ENCODE measurements at regions of chr2 and their contacts with region 1.

Region 1: DNA sequence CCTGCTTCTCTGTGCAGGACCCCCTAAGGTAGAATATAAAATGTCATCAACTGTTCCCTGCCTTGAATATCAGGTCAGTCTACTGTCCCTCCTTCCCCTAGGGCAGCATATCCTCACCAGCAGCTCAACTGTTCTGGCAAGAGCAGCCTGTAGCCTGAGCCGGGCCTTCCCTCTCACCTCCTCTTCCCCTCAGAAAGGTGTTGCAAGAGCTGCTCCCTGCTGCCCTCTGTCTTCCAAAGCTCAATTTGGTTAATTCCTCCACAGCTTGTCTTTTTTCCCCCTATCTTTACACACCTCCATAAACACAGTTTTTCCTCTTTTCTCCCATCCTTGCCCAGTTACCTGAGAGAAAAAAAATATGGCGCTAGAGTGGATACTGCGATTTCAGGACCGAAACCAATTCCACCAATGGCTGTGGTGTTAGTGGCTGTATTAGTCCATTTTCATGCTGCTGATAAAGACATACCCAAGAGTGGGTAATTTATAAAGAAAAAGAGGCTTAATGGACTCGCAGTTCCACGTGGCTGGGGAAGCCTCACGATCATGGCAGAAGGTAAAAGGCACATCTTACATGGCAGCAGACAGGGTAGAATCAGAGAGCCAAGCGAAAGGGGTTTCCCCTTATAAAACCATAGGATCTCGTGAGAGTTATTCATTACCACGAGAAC is 184.7 kb downstream of the MREG start:
- DNase-seq: peak; percentile 66 to 80
- H3K4me3 ChIP-seq: no peak overlapping the region
- H3K4me3 Mint-ChIP-seq: no peak overlapping the region
- H3K27ac Mint-ChIP-seq: peak overlapping the region; percentile 79
- H3K4me1 ChIP-seq: peaks cover 80% of the 10 kb centered on the region
- H3K4me1 Mint-ChIP-seq: peaks cover 32% of the 10 kb centered on the region
- H3K27me3 ChIP-seq: no peaks in the 10 kb centered on the region
- H3K27me3 Mint-ChIP-seq: no peaks in the 10 kb centered on the region
- CTCF ChIP-seq: peak; percentile 54 to 66

Region 2: DNA sequence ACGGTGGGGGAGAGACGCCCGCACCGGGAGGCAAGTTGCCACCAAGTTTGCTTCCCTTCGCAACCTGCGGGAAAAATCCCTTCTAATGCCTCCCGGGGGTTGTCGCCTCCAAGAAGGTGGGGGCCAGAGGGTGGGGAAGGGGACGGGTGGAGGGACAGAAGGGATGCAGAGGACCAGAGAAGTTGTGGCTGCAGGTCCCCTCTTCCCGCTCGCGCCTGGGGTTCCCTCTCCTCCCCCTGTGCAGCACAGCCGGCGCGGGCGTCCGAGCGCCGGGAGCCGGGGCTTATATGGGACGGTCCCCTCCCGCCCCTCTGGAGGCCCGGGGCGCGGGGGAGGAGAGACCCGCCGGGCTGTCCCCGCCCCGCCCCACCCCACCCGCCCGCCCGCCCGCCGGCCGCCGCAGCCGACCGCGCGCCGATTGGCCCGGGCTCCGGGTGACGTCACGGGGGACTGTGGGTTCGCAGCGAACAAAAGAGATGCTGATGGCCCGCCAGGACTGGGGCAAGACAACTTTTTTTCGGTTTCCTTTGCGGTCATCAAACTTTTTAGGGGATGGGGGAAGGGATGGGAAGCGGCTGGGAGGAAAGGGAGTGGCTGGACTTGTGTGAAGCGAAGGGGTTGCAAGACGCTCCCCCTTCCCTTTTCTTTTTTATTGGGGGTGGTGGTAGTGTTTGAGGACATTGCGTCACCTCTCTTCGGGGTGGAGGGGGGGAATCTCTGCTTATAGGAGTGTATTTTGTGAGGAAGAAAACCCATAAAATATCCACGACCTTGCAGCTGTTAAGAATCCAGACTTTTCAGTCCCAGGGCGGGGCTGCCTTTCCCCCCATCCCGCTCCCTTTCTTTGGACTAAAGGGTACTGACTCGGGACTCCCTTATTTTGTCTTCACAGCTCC is 392.6 kb before region 1 on chr2 and contains the start of gene FN1:
- CTCF ChIA-PET with region 1: no interaction called
- POLR2A ChIA-PET with region 1: no interaction called
- intact Hi-C with region 1: loop called (anchors 2 kb)
- DNase-seq: peak; percentile 95 to 96
- H3K4me3 ChIP-seq: peak within 1 kb of the TSS; percentile 99
- H3K4me3 Mint-ChIP-seq: peak within 1 kb of the TSS; percentile 84
- H3K27ac Mint-ChIP-seq: peak within 1 kb of the TSS; percentile 94
- H3K4me1 ChIP-seq: peaks cover 40% of the 10 kb centered on the region
- H3K4me1 Mint-ChIP-seq: peaks cover 26% of the 10 kb centered on the region
- H3K27me3 ChIP-seq: no peaks in the 10 kb centered on the region
- H3K27me3 Mint-ChIP-seq: no peaks in the 10 kb centered on the region
- CTCF ChIP-seq: no peak
- total RNA-seq, gene FN1: 3,805 and 3,872 TPM in 2 replicates

Region 3: GRCh38 chr2:215454519-215455246 is 374.0 kb before region 1 on chr2:
- CTCF ChIA-PET with region 1: no interaction called
- POLR2A ChIA-PET with region 1: no interaction called
- intact Hi-C with region 1: loop called (anchors 1 kb)
- DNase-seq: peak in 1 of 2 experiments; percentile 52
- H3K4me3 ChIP-seq: no peak overlapping the region
- H3K4me3 Mint-ChIP-seq: no peak overlapping the region
- H3K27ac Mint-ChIP-seq: no peak overlapping the region
- H3K4me1 ChIP-seq: peaks cover 9% of the 10 kb centered on the region; the same call in 1 of the 2 replicates
- H3K4me1 Mint-ChIP-seq: peaks cover 7% of the 10 kb centered on the region
- H3K27me3 ChIP-seq: no peaks in the 10 kb centered on the region
- H3K27me3 Mint-ChIP-seq: no peaks in the 10 kb centered on the region
- CTCF ChIP-seq: peak; percentile 65 to 73

Region 4: GRCh38 chr2:215773728-215774127 is 54.9 kb before region 1 on chr2:
- CTCF ChIA-PET with region 1: no interaction called
- POLR2A ChIA-PET with region 1: no interaction called
- intact Hi-C with region 1: loop called (anchors 2 kb)
- DNase-seq: no peak
- H3K4me3 ChIP-seq: no peak overlapping the region
- H3K4me3 Mint-ChIP-seq: no peak overlapping the region
- H3K27ac Mint-ChIP-seq: peak overlapping the region; percentile 56
- H3K4me1 ChIP-seq: peaks cover 35% of the 10 kb centered on the region
- H3K4me1 Mint-ChIP-seq: peaks cover 32% of the 10 kb centered on the region
- H3K27me3 ChIP-seq: no peaks in the 10 kb centered on the region
- H3K27me3 Mint-ChIP-seq: no peaks in the 10 kb centered on the region
- CTCF ChIP-seq: no peak

Region 5: GRCh38 chr2:215793747-215794595 is 34.7 kb before region 1 on chr2:
- CTCF ChIA-PET with region 1: interaction called, 7 read pairs
- POLR2A ChIA-PET with region 1: no interaction called
- intact Hi-C with region 1: loop called (anchors 1 kb)
- DNase-seq: peak in 1 of 2 experiments; percentile 62
- H3K4me3 ChIP-seq: no peak overlapping the region
- H3K4me3 Mint-ChIP-seq: no peak overlapping the region
- H3K27ac Mint-ChIP-seq: peak overlapping the region; percentile 81
- H3K4me1 ChIP-seq: peaks cover 41% of the 10 kb centered on the region
- H3K4me1 Mint-ChIP-seq: peaks cover 48% of the 10 kb centered on the region
- H3K27me3 ChIP-seq: no peaks in the 10 kb centered on the region
- H3K27me3 Mint-ChIP-seq: no peaks in the 10 kb centered on the region
- CTCF ChIP-seq: no peak

Region 6: GRCh38 chr2:215817046-215817445 is 11.6 kb before region 1 on chr2:
- CTCF ChIA-PET with region 1: interaction called, 5 read pairs
- POLR2A ChIA-PET with region 1: interaction called, 3 read pairs
- intact Hi-C with region 1: loop called (anchors 1 kb)
- DNase-seq: no peak
- H3K4me3 ChIP-seq: no peak overlapping the region
- H3K4me3 Mint-ChIP-seq: no peak overlapping the region
- H3K27ac Mint-ChIP-seq: peak overlapping the region; percentile 39
- H3K4me1 ChIP-seq: peaks cover 24% of the 10 kb centered on the region
- H3K4me1 Mint-ChIP-seq: peaks cover 26% of the 10 kb centered on the region
- H3K27me3 ChIP-seq: no peaks in the 10 kb centered on the region
- H3K27me3 Mint-ChIP-seq: no peaks in the 10 kb centered on the region
- CTCF ChIP-seq: no peak

Region 7: DNA sequence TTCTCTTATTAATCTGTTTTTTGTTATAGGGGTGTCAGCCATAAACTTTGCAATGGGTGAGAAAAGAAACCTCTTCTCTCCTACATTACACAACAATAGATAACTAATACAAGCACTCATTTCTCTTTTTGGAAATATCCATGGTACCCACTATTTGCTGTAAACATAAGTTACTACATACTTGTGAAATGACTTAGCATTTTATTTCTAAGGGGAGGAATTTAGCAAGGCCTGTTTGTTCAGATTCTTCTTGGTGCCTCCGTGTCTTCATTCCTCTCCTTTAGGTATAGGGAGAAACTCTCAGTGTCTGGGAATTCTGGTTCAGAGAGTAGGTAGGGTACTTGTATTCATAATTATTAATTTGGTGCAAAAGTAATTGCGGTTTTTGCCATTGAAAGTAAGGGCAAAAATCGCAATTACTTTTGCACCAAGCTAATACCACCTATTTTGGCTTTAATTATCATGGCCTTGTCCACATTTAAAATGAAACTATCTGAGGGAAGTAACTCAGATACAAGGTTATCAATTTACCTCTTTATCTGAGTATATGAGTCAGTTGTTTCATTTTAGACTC is 49.9 kb after region 1 on chr2:
- CTCF ChIA-PET with region 1: interaction called, 6 read pairs
- POLR2A ChIA-PET with region 1: no interaction called
- intact Hi-C with region 1: loop called (anchors 1 kb)
- DNase-seq: peak in 1 of 2 experiments; percentile 39
- H3K4me3 ChIP-seq: no peak overlapping the region
- H3K4me3 Mint-ChIP-seq: no peak overlapping the region
- H3K27ac Mint-ChIP-seq: peak overlapping the region; percentile 74
- H3K4me1 ChIP-seq: peaks cover 40% of the 10 kb centered on the region
- H3K4me1 Mint-ChIP-seq: peaks cover 28% of the 10 kb centered on the region
- H3K27me3 ChIP-seq: no peaks in the 10 kb centered on the region
- H3K27me3 Mint-ChIP-seq: no peaks in the 10 kb centered on the region
- CTCF ChIP-seq: no peak

Region 8: DNA sequence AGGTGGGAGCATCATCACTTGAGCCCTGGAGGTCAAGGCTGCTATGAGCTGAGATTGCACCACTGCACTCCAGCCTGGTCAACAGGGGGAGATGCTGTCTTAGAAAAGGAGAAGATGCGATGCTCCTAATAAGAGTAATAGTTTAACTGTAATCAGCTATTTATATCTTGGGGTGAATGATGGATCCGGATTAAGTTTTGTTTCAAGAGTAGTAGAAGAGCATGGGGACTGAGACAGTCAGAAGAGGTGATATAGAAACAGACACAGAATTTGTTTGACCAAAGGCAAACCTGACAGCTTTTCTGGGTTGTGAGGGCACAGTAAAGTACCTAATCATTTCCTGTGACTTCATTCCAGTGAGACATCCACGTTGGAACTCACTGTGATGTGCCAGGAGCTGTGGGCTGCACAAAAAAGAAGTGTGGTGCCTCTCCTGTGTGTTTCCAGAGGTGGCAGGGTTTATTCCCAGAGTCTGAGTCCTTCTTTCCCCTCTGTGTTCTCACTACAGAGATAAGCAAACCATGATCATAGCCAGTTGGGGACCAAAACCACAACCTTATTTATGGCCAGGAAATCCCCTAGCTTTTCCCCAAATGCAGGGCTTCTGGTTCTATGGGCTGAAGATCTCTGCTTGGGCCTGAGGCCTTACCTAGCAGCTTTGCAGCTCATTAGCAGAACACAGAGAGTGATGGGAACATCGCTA is 394.1 kb after region 1 on chr2:
- CTCF ChIA-PET with region 1: no interaction called
- POLR2A ChIA-PET with region 1: no interaction called
- intact Hi-C with region 1: no loop called
- DNase-seq: no peak
- H3K4me3 ChIP-seq: no peak overlapping the region
- H3K4me3 Mint-ChIP-seq: no peak overlapping the region
- H3K27ac Mint-ChIP-seq: no peak overlapping the region
- H3K4me1 ChIP-seq: no peaks in the 10 kb centered on the region
- H3K4me1 Mint-ChIP-seq: no peaks in the 10 kb centered on the region
- H3K27me3 ChIP-seq: no peaks in the 10 kb centered on the region
- H3K27me3 Mint-ChIP-seq: no peaks in the 10 kb centered on the region
- CTCF ChIP-seq: no peak

Measured in Caco-2 (cell line).